Activated naive CD4-positive, alpha-beta T cell treated with anti-CD3 and anti-CD28 coated beads for 36 hours (primary cell): ENCODE measurements at regions of chr19 and their contacts with region 1.

Region 1: DNA sequence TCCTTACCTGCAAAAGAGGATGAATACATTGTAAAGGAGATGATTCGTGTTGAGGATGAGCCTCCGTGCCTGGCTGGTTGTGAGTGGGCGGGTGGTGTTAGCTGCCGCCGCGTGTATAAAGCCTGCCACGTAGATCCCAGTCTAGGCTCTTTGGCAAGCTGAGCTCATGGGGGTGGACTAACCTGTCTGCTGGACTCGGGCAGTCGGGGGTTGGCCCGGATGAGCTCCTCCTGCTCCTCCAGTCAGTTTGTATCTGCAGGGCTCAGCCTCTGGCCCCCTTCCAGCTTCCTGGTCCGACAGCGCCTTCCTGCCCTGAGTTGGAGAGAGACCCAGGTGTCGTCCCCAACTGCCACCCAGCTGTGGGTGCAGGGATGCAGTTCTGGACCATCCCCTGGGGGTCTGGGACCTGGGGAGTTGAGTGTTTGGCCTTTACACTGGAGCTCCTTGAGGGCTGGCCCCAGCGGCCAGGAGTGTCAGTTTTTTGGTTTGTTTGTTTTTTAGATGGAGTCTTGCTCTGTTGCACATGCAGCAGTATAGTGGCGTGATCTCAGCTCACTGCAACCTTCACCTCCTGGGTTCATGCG is 20.9 kb downstream of the TECR start:
- DNase-seq: no peak
- H3K4me3 Mint-ChIP-seq: no peak overlapping the region
- H3K27ac Mint-ChIP-seq: peak overlapping the region; percentile 1
- H3K4me1 Mint-ChIP-seq: peaks cover 51% of the 10 kb centered on the region
- H3K27me3 Mint-ChIP-seq: no peaks in the 10 kb centered on the region

Region 2: DNA sequence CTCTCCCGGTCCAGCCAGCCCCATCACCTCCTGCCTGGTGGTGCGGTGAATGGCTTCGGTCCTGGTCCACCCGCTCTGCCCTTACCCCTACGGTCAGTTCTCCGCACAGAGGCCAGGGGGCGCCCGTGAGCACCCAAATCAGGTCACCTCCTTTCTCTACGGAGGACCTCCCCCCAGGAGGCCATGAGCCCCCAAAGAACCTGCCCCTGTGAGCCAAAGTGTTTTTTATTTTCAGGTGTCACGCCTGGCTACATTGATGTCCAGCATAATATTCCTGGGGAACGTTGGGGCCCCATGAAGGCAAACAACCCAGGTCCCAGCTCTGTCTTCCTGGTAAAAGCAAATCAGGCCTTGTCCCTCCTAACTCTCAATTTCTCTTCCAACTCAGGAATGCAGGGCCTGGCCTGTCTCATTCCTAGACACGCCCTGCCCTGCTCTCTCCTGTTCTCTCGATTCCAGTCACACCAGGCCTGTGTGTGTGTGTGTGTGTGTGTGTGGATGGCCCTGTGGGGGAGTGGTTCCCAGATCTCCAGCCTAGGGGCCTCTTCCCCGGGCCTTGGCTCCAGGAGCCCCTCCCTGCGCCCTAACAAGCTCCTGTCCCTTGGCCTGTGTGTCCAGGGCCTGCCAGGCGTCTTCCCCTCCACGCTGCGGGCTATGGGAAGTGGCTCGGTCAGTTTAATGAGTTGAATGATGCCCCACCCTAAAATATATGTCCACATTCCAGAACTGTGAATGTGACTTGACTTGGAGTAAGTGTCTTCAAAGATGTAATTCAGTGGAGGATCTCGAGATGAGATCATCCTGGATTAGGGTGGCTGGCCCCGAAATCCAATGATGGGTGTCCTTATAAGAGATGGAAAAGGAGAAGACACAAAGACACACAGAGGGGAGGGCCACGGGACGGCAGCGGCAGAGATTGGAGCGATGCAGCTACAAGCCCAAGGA is 44.5 kb before region 1 on chr19:
- CTCF ChIA-PET with region 1: interaction called, 19 read pairs
- intact Hi-C with region 1: loop called (anchors 2 kb)
- DNase-seq: peak; percentile 87
- H3K4me3 Mint-ChIP-seq: no peak overlapping the region
- H3K27ac Mint-ChIP-seq: peak overlapping the region; percentile 69
- H3K4me1 Mint-ChIP-seq: peaks cover 64% of the 10 kb centered on the region
- H3K27me3 Mint-ChIP-seq: no peaks in the 10 kb centered on the region

Region 3: DNA sequence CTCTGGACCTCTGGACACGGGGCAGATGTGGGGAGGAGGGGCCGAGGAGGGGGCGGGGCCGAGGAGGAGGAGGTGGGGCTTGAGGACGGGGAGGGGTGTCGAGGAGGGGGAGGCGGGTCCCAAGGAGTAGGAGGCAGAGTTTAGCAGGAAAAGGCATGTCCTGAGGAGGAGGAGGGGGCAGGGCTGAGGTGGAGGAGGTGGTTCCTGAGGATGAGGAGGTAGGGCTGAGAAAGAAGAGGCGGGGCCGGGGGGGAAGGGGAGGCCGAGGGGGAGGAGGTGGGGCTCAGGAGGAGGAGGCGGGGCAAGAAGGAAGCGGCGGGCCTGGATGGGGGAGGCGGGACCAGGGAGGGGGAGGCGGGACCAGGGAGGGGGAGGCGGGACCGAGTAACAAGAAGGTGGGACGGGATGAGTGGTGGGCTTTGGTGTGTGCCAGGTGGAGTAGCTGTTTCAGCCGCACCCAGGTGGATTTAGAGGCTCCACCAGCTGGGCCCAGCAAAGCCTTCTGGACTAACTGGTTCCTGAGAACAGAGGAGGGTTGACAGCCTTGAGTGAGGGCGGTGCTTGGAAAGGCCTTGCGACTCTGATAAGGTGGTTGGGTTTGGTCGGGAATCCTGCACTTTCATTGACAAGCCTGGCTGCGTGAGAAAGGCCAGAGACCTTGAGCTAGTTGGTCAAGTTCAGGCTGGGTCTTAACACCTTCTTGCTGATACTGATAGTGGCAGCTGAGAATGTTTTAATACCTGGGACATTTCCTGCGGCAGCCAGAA is 13.2 kb before region 1 on chr19:
- CTCF ChIA-PET with region 1: interaction called, 11 read pairs
- intact Hi-C with region 1: no loop called
- DNase-seq: peak; percentile 75
- H3K4me3 Mint-ChIP-seq: no peak overlapping the region
- H3K27ac Mint-ChIP-seq: no peak overlapping the region
- H3K4me1 Mint-ChIP-seq: peaks cover 46% of the 10 kb centered on the region
- H3K27me3 Mint-ChIP-seq: no peaks in the 10 kb centered on the region